ENCODE measurements at regions of chr20 and their contacts with region 1.

Region 1: GRCh38 chr20:543369-544152 is at the start of gene CSNK2A1:
- DNase-seq: peak; percentile 95
- CTCF ChIP-seq: no peak

Region 2: GRCh38 chr20:519999-520398 is 23.6 kb before region 1 on chr20:
- CTCF ChIA-PET with region 1: interaction called, 10 read pairs
- POLR2A ChIA-PET with region 1: no interaction called
- DNase-seq: no peak
- CTCF ChIP-seq: no peak

Region 3: DNA sequence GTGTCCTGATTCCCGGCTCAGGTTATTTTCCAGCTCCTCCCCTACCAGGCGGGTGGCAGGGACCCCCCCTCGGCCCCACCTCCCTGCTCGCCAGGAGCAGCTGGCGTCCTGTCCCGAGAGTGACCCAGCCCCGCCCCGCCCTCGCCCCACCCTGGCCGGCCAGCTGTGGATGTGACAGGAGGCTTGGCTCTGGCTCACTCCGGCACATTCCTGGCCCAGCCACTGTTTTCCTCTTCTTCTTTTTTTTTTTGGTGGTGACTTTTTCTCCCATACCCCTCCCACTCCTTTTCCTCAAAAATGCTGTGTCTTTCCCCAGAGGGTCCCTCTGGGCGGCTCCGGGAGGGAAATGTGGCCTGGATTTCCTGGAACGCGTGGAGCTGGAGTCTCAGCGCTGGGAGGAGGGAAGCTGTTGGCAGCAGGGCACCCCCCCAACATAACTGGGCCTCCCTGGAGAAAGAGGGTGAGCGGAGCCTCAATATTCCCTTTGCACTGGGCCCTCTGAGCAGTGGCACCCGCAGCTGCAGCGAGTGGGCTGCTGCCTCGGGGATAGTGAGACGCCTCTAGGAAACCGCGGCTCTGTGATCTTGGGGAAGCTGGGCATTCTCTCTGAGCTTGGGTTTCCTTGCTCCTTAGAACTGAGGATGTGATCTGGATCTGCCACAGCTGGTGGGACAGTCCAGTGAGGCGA is 28.3 kb after region 1 on chr20:
- CTCF ChIA-PET with region 1: no interaction called
- POLR2A ChIA-PET with region 1: no interaction called
- DNase-seq: no peak
- CTCF ChIP-seq: no peak